OCI-LY7 (cell line): ENCODE measurements at regions of chr17 and their contacts with region 1.

Region 1: DNA sequence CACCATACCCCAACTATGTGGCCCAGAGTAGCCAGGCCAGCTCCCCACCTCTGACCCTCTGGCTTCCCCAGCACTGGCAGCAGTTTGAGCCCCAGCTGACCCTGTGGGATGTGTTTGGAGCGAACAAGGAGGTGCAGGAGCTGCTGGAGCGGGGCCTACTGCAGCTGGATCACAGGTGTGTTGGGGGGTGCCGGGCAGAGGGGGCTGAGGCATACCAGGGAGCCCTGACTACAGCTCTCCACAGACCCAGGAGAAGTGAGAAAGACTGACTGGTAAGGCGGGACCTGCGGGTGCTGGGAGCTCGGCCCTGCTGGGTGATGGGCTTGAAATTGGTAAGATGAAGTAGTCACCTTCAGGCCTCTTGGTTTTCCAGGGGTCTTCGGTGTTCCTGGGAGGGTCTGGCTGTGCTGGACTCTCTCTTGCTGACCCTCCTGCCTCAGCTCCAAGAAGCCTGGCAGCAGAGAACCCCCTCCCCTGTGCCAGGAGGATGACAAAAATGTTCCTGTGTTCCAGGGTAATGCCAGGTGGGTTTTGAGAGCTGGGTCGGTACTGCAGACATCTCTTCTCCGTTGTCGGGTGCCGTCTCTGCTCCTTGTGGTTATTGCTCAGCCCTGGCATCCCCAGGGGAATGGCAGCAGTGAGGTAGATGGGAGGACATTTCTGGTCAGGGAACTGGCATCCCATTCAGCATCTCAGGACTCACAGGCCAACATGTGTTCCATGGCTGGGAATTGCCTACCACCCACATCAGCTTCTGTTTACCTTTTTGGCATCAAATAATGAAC is 5.9 kb downstream of the RSAD1 start:
- DNase-seq: no peak
- H3K4me3 ChIP-seq: no peak overlapping the region
- H3K27ac ChIP-seq: no peak overlapping the region
- H3K4me1 ChIP-seq: peaks cover 8% of the 10 kb centered on the region
- CTCF ChIP-seq: no peak

Region 2: GRCh38 chr17:50447870-50448595 is 36.5 kb before region 1 on chr17:
- CTCF ChIA-PET with region 1: interaction called, 15 read pairs
- POLR2A ChIA-PET with region 1: no interaction called
- intact Hi-C with region 1: no loop called
- DNase-seq: no peak
- H3K4me3 ChIP-seq: no peak overlapping the region
- H3K27ac ChIP-seq: no peak overlapping the region
- H3K4me1 ChIP-seq: no peaks in the 10 kb centered on the region
- CTCF ChIP-seq: no peak

Region 3: DNA sequence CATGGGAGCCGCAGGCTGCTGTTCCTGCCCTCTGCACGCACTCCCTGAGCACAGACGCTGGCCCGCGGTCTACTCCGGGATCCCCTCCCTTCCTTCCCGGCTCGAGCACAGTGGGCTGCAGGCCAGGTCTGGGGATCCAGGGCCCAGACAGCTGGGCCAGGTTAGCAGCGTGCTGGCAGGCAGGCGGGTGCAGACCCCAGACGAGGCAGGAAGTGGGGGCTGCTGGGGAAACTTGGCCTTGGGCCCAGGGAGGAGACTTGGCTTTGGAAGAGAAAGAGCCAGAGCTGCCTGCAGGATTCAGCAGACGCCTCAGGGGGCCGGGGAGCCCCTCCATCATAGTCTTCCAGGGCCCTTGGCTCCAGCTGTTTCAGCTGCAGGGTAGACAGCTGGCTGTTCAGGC is 120.0 kb after region 1 on chr17:
- CTCF ChIA-PET with region 1: no interaction called
- POLR2A ChIA-PET with region 1: no interaction called
- intact Hi-C with region 1: no loop called
- DNase-seq: no peak
- H3K4me3 ChIP-seq: no peak overlapping the region
- H3K27ac ChIP-seq: no peak overlapping the region
- H3K4me1 ChIP-seq: no peaks in the 10 kb centered on the region
- CTCF ChIP-seq: no peak